Esophagus muscularis mucosa (tissue), 4 donors: ENCODE measurements at regions of chr14 and their contacts with region 1.

Region 1: DNA sequence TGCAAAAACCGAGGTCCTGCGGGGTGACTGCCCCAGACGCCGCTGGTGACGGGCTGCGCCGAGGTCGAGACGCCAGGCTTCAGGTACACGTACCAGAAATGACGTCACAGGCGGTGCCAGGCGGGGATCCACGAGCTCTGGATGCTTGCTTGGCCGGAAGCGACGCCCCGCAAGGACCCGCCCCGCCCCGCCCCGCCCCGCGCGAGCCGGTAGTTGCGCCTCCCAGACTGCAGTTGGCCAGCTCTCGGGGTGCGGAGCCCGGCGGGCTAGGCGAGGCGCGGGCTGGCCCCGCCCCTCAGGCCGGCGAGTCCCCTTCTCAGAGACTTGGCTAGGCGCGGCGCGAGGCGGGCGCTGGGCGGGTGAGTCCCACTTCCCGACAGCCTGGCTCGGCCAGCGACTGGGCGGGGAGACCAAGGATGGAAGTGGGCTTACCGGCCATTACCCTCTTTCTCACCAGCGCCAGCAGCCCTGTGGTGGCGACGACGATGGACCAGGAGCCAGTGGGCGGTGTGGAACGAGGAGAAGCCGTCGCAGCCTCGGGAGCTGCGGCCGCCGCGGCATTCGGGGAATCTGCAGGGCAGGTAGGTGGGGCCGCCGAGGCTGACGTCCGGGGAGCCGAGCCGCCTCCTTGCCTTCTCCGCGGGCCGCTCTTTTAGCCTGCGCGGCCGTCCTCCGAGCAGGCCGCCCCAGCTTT is at the start of gene FAM177A1:
- DNase-seq: peak; percentile 100
- H3K4me3 ChIP-seq: peak within 1 kb of the TSS; percentile 71 to 96 (median 84)
- H3K27ac ChIP-seq: peak within 1 kb of the TSS; percentile 90 to 99 (median 97)
- H3K4me1 ChIP-seq: peaks cover 29 to 50% (median 35%) of the 10 kb centered on the region in 4 donors
- H3K27me3 ChIP-seq: no peaks in the 10 kb centered on the region
- CTCF ChIP-seq: peak in 1 of 3 experiments; percentile 3
- EP300 ChIP-seq: peak; percentile 49
- POLR2A ChIP-seq: peak; percentile 81
- total RNA-seq, gene FAM177A1: 49.0 to 60.8 (median 54.7) TPM

Region 2: DNA sequence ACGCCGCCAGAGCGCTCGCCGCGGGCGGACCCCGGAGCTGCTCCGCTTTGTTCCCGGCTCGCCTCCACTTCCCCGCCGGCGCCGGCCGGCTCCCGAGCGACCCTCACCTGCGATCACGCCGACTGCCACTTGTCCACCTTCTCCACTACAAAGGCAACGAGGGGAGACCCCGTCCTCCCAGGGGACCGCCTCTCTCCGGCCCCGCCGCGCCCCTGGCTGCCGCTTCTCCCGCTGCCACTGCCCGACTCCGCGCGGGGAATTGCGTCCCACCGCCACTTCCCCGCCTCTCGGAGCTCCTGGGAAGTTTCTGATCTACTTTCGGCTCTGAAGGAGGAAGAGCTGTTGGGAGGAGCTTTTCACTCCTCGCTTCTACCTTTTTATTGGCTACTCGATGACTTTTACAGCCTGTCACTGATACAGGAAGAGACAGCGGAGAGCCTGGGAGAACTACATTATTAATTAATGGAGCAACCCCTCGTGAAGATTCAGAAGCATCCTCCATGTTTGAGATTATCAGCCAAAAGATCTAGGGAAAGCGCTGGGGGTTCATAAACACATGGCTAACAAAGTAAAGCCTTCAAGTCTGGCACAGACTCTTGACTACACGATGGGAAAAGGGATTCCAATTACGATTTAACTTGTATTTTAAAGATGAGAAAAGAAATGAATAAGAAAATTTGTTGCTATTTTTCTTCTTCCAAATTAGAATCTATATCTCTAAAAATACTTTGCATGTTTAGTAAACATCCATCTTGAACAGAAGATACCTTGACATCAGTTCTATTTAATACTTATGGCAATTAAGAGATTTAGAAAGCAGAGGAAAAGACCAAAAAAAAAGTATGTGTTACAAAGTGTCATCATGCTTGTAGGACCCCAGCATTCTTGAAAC is 170.9 kb before region 1 on chr14 and contains the start of gene BAZ1A:
- intact Hi-C with region 1: loop called (anchors 2 kb)
- DNase-seq: peak; percentile 92
- H3K4me3 ChIP-seq: peak within 1 kb of the TSS; percentile 75 to 96 (median 91)
- H3K27ac ChIP-seq: peak within 1 kb of the TSS; percentile 99 to 100 (median 99)
- H3K4me1 ChIP-seq: peaks cover 9 to 18% (median 15%) of the 10 kb centered on the region in 4 donors
- H3K27me3 ChIP-seq: no peaks in the 10 kb centered on the region
- CTCF ChIP-seq: peak in 1 of 3 experiments; percentile 33
- EP300 ChIP-seq: no peak
- POLR2A ChIP-seq: peak; percentile 81
- total RNA-seq, gene BAZ1A: 14.6 to 27.3 (median 24.5) TPM

Region 3: GRCh38 chr14:34982417-34983147 is 63.6 kb before region 1 on chr14 and contains the start of gene SRP54:
- intact Hi-C with region 1: loop called (anchors 5 kb)
- DNase-seq: peak; percentile 99
- H3K4me3 ChIP-seq: peak within 1 kb of the TSS; percentile 73 to 93 (median 80)
- H3K27ac ChIP-seq: peak within 1 kb of the TSS; percentile 92 to 98 (median 97)
- H3K4me1 ChIP-seq: peaks cover 36 to 55% (median 44%) of the 10 kb centered on the region in 4 donors
- H3K27me3 ChIP-seq: no peaks in the 10 kb centered on the region
- CTCF ChIP-seq: peak in 2 of 3 experiments; percentile 26 to 33
- EP300 ChIP-seq: no peak
- POLR2A ChIP-seq: peak; percentile 45
- total RNA-seq, gene SRP54: 31.2 to 52.7 (median 39.3) TPM

Region 4: GRCh38 chr14:35121887-35122695 is 75.9 kb after region 1 on chr14 and contains the starts of genes PPP2R3C and PRORP:
- intact Hi-C with region 1: loop called (anchors 5 kb)
- DNase-seq: peak; percentile 98
- H3K4me3 ChIP-seq: peak within 1 kb of the TSS; percentile 69 to 78 (median 71)
- H3K27ac ChIP-seq: peak within 1 kb of the TSS; percentile 90 to 95 (median 95)
- H3K4me1 ChIP-seq: peaks cover 17 to 64% (median 47%) of the 10 kb centered on the region in 4 donors
- H3K27me3 ChIP-seq: no peaks in the 10 kb centered on the region
- CTCF ChIP-seq: no peak
- EP300 ChIP-seq: peak; percentile 49
- POLR2A ChIP-seq: no peak
- total RNA-seq, gene PPP2R3C: 29.5 to 48.6 (median 36.8) TPM
- total RNA-seq, gene PRORP: 9.6 to 20.0 (median 17.3) TPM

Region 5: GRCh38 chr14:35420036-35420811 is 374.0 kb after region 1 on chr14:
- intact Hi-C with region 1: loop called (anchors 10 kb)
- DNase-seq: no peak
- H3K4me3 ChIP-seq: no peak overlapping the region
- H3K27ac ChIP-seq: peak overlapping the region in 3 of 4 donors; percentile 0 to 47 (median 45)
- H3K4me1 ChIP-seq: peaks cover 4 to 42% (median 32%) of the 10 kb centered on the region in 4 donors
- H3K27me3 ChIP-seq: no peaks in the 10 kb centered on the region
- CTCF ChIP-seq: no peak
- EP300 ChIP-seq: no peak
- POLR2A ChIP-seq: no peak